Activated CD8-positive, alpha-beta T cell treated with anti-CD3 and anti-CD28 coated beads for 36 hours (primary cell): ENCODE measurements at regions of chr16 and their contacts with region 1.

Region 1: DNA sequence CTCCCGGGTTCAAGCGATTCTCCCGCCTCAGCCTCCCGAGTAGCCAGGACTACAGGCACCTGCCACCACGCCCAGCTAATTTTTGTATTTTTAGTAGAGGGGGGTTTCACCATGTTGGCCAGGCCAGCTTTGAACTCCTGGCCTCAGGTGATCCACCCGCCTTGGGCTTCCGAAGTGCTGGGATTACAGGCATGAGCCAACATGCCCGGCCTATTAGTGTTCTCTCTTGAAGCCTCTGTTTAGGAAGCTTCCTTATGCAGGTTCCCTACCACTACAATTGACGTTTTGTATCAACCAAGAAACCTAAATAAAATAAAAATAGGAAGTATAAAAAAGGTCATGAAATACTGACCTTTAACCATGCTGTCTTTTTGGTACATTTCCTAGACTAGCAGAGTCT is 16.0 kb downstream of the CHST5 start:
- DNase-seq: no peak
- ATAC-seq: no peak
- H3K4me3 Mint-ChIP-seq: no peak overlapping the region
- H3K27ac Mint-ChIP-seq: no peak overlapping the region
- H3K4me1 Mint-ChIP-seq: peaks cover 10% of the 10 kb centered on the region
- H3K27me3 Mint-ChIP-seq: no peaks in the 10 kb centered on the region
- CTCF ChIP-seq: no peak

Region 2: DNA sequence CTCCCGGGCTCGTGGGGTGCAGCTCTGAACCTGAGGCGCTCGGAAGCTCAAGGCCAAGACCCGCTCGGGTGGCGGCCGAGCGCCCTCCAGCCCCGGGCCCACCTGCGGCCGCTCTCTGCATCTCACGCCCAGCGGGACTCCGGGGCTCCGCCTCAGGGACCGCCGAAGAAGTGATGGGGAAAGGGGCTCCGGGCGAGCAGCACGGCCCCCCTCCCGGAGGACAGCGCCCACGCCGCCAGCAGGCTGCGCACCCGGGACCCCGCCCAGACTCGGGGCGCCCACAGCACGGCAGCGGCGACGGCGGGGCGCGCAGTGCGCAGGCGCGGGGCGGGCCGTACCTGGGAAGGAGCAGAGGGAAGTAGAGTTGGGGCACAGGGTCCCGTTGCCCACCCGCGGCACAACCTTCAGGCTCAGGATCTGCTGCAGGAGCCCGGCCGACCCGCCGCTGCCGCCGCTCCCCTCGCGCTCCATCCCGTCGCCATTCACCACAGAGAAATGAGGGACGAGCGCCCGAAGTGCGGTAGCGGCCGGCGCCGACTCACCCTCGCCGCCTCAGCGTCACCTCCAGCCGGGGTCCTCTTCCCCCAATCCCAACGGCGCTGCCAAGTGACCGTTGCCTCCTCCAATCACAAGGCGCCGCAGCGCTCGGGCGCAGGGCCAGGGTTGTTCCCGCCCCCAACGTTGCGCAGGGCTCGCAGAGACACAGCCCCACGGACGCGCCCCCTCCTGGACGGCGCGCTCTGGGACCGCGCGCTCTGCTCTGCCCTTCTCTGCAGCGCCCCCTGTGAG is 55.6 kb before region 1 on chr16 and contains the start of gene TMEM170A:
- CTCF ChIA-PET with region 1: interaction called, 40 read pairs
- POLR2A ChIA-PET with region 1: interaction called, 3 read pairs
- intact Hi-C with region 1: no loop called
- DNase-seq: peak; percentile 99
- ATAC-seq: peak; percentile 96
- H3K4me3 Mint-ChIP-seq: peak within 1 kb of the TSS; percentile 84
- H3K27ac Mint-ChIP-seq: peak within 1 kb of the TSS; percentile 88
- H3K4me1 Mint-ChIP-seq: peaks cover 41% of the 10 kb centered on the region
- H3K27me3 Mint-ChIP-seq: no peaks in the 10 kb centered on the region
- CTCF ChIP-seq: peak; percentile 99
- total RNA-seq, gene TMEM170A: 25.1 to 27.1 TPM

Region 3: GRCh38 chr16:75506567-75506966 is 13.3 kb before region 1 on chr16:
- CTCF ChIA-PET with region 1: interaction called, 14 read pairs
- POLR2A ChIA-PET with region 1: interaction called, 3 read pairs
- intact Hi-C with region 1: no loop called
- DNase-seq: no peak
- ATAC-seq: no peak
- H3K4me3 Mint-ChIP-seq: no peak overlapping the region
- H3K27ac Mint-ChIP-seq: no peak overlapping the region
- H3K4me1 Mint-ChIP-seq: peaks cover 3% of the 10 kb centered on the region
- H3K27me3 Mint-ChIP-seq: peaks cover 6% of the 10 kb centered on the region
- CTCF ChIP-seq: no peak

Region 4: GRCh38 chr16:75555707-75556430 is 36.0 kb after region 1 on chr16 and contains the start of gene TMEM231:
- CTCF ChIA-PET with region 1: interaction called, 19 read pairs
- POLR2A ChIA-PET with region 1: no interaction called
- intact Hi-C with region 1: no loop called
- DNase-seq: peak; percentile 99
- ATAC-seq: peak; percentile 97
- H3K4me3 Mint-ChIP-seq: peak within 1 kb of the TSS; percentile 85
- H3K27ac Mint-ChIP-seq: peak within 1 kb of the TSS; percentile 77
- H3K4me1 Mint-ChIP-seq: peaks cover 4% of the 10 kb centered on the region
- H3K27me3 Mint-ChIP-seq: peaks cover 6% of the 10 kb centered on the region
- CTCF ChIP-seq: no peak
- total RNA-seq, gene TMEM231: 4.9 to 5.1 TPM